Ascending aorta (tissue), 2 donors: ENCODE measurements at regions of chr6 and their contacts with region 1.

Region 1: DNA sequence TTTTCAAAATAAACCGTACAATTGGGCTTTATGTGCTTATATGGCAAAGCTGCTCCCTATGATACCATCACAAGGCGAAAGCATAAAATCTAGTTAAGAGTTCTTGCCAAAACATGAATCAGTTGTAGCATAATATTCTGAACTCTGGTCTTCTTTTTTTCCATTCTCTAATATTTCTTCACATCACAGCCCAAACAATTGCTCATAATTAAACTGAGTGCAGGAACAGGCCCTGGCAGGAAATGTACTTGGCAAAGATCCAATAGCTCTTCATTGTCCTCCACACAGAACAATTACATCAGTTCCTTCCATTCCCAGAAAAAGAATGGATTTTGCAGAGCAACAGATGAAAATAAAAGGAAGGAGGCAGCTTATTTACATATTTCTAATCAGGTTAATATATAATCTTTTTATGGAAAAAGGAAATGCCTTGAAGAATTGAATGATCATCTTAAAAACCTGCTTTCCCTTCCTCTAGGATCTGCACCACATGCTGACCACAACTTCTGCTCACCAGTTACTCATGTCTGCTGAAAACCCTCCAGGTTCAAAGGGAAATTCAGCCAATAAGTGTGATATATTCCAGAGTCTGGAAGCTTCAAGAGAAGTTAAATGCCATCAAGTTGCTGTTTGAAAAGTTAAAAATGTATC is 123.3 kb upstream of the COL21A1 start:
- DNase-seq: peak in 1 of 2 donors; percentile 84
- H3K4me3 ChIP-seq: peak overlapping the region in 1 of 2 donors; percentile 51
- H3K27ac ChIP-seq: peak overlapping the region; percentile 83 to 93
- H3K4me1 ChIP-seq: peaks cover 6 to 58% of the 10 kb centered on the region in 2 donors
- H3K27me3 ChIP-seq: no peaks in the 10 kb centered on the region
- CTCF ChIP-seq: no peak

Region 2: DNA sequence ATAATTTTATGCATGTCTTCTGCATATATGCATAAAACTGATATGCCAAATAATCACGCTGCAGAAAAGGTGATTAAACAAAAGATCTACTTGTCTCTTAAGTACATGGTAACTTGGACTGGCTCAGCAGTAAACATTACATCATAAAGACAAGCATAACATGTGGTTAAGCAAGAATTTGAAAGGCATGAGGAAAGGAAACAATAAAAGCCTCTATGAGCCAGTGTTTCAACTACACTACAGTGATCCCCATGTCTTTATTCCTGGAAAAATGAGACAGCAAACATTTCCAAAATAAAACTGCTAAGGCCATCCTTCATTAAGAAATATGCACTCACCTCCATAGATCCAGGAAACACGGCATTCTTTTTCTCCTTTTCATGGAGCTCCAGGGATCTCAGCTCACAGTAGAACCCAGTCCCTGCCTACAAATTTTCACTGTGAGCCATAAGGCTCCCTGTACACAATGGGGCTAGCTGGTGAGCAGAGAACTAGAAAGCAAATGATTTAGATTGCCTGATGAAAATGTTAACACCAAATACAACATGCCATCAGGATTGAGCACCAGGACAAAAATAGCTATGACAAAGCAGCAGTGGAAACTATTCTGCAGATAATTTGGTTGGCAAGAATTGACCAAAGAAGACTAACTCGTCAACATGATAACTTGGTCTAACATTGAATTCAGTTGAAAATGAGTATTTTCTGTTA is 279.4 kb before region 1 on chr6:
- intact Hi-C with region 1: loop called (anchors 5 kb)
- DNase-seq: no peak
- H3K4me3 ChIP-seq: peak overlapping the region in 1 of 2 donors; percentile 9
- H3K27ac ChIP-seq: peak overlapping the region; percentile 79 to 86
- H3K4me1 ChIP-seq: peaks cover 0 to 13% of the 10 kb centered on the region in 2 donors
- H3K27me3 ChIP-seq: no peaks in the 10 kb centered on the region
- CTCF ChIP-seq: no peak

Region 3: DNA sequence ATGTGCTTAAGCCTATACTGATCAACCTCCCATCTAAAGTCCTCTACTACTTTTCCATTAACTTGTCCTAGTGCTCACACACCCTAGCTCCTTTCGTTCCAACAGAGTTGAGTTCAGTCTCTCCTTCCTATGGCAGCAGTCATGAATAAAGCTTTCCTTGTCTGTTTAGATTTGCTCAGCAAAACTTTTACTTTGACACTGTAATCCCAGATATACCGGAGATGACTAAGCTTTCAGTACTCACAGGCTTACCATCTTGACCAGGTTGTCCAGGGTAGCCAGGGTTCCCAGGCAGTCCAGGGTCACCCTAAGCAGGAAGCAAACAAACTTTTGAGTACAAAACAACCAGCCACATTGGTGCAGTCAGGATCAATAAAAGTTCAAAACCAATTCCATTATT is 214.0 kb before region 1 on chr6:
- intact Hi-C with region 1: no loop called
- DNase-seq: no peak
- H3K4me3 ChIP-seq: no peak overlapping the region
- H3K27ac ChIP-seq: no peak overlapping the region
- H3K4me1 ChIP-seq: no peaks in the 10 kb centered on the region
- H3K27me3 ChIP-seq: no peaks in the 10 kb centered on the region
- CTCF ChIP-seq: no peak

Region 4: DNA sequence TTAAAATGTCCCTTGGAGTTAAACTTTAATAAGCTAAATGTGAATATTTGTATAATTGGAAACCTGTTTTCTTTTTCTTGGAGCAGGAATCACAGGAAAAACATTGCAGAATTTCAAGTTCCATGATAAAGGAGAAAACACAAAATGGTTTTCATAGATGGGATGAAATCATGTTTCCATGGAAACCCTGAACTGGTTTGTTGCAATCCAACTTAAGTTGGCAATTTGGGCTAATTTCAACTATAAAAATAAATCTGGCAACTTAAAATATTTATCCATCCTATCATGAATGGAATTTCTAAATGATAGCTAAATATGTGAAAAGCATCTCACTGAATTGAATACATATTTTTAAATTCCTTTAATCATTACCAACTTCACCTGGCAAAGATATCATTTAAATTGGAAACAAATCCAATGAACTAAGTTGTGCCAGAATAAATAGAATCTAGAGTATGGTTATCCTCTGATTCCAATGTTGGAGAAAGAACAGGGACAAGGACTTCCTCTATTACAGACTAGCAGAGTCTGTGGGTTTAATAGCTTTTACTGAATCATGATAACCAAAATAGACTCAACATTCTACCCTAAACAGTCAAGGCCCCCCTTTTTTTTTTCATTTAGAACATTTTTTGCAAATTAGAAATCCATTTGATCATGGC is 156.5 kb before region 1 on chr6:
- intact Hi-C with region 1: loop called (anchors 10 kb)
- DNase-seq: no peak
- H3K4me3 ChIP-seq: peak overlapping the region in 1 of 2 donors; percentile 45
- H3K27ac ChIP-seq: peak overlapping the region; percentile 57 to 64
- H3K4me1 ChIP-seq: peaks cover 4 to 30% of the 10 kb centered on the region in 2 donors
- H3K27me3 ChIP-seq: no peaks in the 10 kb centered on the region
- CTCF ChIP-seq: no peak

Region 5: DNA sequence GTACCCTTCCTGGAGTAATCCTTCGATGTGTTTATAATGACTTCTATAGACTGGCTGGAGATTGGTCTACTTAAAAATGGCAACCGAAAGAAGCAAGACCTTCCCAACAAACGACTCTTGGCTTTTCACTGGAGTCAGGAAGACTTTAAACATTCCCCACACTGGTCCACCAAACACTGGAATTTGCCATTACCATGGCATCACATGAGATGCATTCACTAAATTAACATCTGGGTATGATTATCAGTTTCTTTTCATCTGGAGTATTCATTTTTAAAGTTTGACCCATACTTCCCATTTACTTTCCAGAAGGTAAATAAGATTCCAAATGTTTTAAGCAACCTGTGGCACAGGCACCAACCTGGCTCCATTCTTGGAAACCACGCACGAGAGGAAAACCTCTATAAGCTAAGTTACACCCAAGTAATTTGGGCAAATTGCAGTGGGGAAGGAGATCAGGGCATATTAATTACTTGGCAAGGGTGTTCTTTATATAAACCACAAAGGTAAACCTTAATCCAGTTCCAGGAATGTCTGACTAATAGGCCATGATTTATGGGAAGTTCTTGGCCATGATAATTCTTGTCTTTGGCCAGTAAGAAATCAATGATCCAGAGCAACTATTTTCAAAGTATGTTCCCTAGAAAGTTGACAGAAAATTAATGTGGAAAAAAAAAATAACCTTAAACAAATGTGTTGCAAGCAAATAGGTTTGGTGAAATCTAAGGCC is 66.7 kb after region 1 on chr6:
- intact Hi-C with region 1: no loop called
- DNase-seq: no peak
- H3K4me3 ChIP-seq: no peak overlapping the region
- H3K27ac ChIP-seq: peak overlapping the region in 1 of 2 donors; percentile 11
- H3K4me1 ChIP-seq: no peaks in the 10 kb centered on the region
- H3K27me3 ChIP-seq: no peaks in the 10 kb centered on the region
- CTCF ChIP-seq: no peak

Region 6: GRCh38 chr6:56451165-56451739 is 80.6 kb after region 1 on chr6:
- intact Hi-C with region 1: loop called (anchors 5 kb)
- DNase-seq: peak in 1 of 2 donors; percentile 82
- H3K4me3 ChIP-seq: no peak overlapping the region
- H3K27ac ChIP-seq: peak overlapping the region; percentile 67 to 72
- H3K4me1 ChIP-seq: peaks cover 0 to 18% of the 10 kb centered on the region in 2 donors
- H3K27me3 ChIP-seq: no peaks in the 10 kb centered on the region
- CTCF ChIP-seq: no peak

Region 7: DNA sequence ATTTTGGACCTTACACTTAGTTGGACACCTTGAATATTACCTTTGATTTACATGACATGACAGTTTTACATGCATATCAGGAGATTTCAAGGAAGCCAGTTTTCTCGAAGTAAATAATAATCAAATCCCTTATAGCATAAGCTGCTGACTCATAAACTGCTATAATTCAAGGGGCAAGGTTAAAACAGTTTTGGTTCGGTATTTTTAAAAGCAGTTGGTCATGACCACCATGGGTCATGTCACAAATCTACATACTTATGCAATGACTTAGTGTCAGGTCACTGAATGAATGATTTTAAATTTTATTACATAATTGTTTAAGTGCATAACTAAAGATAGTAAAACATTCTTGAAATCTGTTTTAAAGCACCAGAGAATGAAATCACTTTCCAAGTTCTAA is 114.0 kb after region 1 on chr6:
- intact Hi-C with region 1: loop called (anchors 5 kb)
- DNase-seq: no peak
- H3K4me3 ChIP-seq: no peak overlapping the region
- H3K27ac ChIP-seq: peak overlapping the region in 1 of 2 donors; percentile 8
- H3K4me1 ChIP-seq: peaks cover 0 to 8% of the 10 kb centered on the region in 2 donors
- H3K27me3 ChIP-seq: no peaks in the 10 kb centered on the region
- CTCF ChIP-seq: no peak

Region 8: DNA sequence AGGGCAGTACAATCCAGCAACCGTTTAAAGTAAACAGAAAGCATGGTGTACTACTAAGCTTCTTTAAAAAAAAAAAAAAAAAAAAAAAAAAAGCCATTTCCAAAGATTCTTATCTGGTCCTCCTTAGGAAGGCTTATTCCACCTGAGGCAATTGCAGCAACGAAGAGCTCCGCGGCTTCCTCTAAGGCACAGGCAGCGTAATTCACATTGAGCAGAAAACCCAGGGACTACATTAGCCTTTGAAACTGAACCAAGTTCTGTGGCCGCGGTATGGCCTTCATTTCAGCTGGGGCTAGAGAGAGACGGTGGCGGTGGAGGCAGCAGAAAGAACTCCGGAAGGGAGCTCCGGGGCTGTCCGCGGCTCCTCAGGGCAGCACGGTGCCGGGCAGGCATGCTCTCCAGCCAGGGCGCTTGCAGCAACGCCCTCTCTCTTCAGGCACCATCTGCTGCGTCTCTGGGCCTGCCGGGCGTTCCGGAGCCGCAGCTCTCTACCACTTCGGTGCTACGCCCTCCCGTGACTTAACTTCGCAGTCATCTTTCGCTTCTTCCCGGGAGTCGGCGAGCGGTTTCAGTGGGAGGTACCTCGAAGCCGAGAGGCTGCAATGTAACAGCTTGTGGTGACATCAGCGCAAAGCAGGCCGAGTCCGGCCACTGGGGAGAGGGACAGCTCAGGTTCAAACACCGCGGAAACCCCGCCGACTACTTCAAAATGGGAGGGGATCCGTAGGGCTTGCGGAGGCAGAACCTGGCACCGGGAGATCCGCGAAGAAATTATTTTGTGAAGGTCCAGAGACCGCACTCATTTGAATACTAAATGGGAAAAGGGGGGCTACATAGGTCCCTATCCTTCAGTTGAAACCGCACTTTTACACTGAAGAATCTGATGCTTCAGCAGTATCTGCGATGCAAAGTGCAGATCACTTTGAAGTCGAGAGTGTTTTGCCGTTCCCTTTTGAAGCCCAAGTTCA is 172.0 kb after region 1 on chr6:
- intact Hi-C with region 1: loop called (anchors 2 kb)
- DNase-seq: peak; percentile 93 to 98
- H3K4me3 ChIP-seq: peak overlapping the region; percentile 53 to 84
- H3K27ac ChIP-seq: peak overlapping the region; percentile 94 to 96
- H3K4me1 ChIP-seq: peaks cover 3 to 27% of the 10 kb centered on the region in 2 donors
- H3K27me3 ChIP-seq: no peaks in the 10 kb centered on the region
- CTCF ChIP-seq: peak; percentile 21 to 48 (median 38)

Region 9: GRCh38 chr6:57257911-57258541 is 887.3 kb after region 1 on chr6:
- intact Hi-C with region 1: loop called (anchors 10 kb)
- DNase-seq: no peak
- H3K4me3 ChIP-seq: peak overlapping the region in 1 of 2 donors; percentile 51
- H3K27ac ChIP-seq: peak overlapping the region; percentile 89 to 95
- H3K4me1 ChIP-seq: peaks cover 11 to 43% of the 10 kb centered on the region in 2 donors
- H3K27me3 ChIP-seq: no peaks in the 10 kb centered on the region
- CTCF ChIP-seq: no peak